Naive thymus-derived CD4-positive, alpha-beta T cell (primary cell): ENCODE measurements at regions of chr3 and their contacts with region 1.

Region 1: DNA sequence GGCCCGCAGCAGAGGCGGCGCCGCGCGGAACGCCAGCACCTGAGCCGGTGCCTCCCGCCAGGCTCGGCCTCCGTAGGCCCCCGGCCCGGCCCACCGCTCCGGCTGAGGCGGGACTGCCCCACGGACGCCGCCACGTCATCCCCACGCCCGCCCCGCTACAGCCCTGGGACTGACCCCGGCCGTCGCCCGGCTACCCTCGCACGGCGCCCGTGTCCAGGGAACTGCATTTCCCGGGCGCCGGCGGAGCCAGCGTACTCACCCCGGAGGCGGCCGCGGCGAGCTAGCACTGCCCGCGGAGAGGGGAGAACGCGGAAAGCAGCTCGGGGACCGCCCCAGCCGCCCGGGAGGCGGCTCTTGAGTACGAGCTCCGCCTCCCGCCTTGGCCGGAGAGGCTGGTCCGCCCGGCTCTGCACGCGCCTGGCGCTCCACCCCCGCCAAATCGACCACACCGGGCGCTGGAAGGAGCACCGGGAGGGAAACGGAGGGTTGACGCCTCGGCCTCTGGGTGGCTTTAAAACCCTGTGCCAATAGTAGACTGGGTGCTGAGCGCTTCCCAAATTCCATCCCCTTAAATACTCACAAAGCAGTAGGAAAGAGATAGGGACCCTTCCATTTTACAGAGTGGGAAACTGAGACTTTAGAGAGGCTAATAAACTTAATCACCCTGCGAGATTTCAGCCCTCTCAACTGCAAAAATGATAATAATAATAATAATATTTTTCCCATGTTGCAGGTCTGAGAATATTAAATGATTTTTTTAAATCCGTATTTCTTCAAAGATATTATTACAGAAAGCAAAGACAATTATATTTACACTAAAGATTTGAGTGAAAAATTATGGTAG is at the start of gene B4GALT4:
- DNase-seq: peak; percentile 59 to 79 (median 63)
- ATAC-seq: peak; percentile 78
- H3K4me3 ChIP-seq: peak within 1 kb of the TSS; percentile 71
- H3K4me3 Mint-ChIP-seq: peak within 1 kb of the TSS; percentile 90 to 99 (median 94)
- H3K27ac ChIP-seq: peak within 1 kb of the TSS; percentile 90
- H3K27ac Mint-ChIP-seq: peak within 1 kb of the TSS; percentile 83 to 96 (median 91)
- H3K4me1 ChIP-seq: peaks cover 23 to 27% of the 10 kb centered on the region in 2 donors
- H3K4me1 Mint-ChIP-seq: peaks cover 24 to 45% (median 36%) of the 10 kb centered on the region in 7 donors
- H3K27me3 ChIP-seq: no peaks in the 10 kb centered on the region
- H3K27me3 Mint-ChIP-seq: no peaks in the 10 kb centered on the region
- total RNA-seq, gene B4GALT4: 18.0 to 39.8 (median 31.9) TPM

Region 2: DNA sequence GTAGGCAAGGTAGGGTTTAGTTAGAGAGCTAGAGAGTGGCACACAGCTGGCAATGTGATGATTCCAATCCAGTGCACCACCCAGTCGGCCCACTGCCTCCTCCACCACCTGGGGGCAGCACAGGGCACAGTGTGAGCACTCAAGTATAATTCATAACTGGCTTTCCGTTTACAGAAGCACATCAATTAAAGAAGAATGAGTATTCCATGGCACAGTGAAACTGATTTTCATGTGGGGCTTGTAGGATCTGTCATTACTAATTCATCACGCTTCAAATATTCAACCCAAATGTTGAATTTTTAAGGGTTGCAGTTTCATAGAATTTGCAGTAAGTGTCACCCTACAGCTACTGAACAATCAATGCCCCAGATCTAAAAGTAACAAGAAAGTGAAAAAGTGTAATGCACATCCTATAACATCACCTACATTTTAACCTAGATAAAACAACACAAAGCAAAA is 356.0 kb before region 1 on chr3:
- CTCF ChIA-PET with region 1: interaction called, 38 read pairs
- POLR2A ChIA-PET with region 1: interaction called, 9 read pairs
- intact Hi-C with region 1: loop called (anchors 1 kb)
- DNase-seq: peak; percentile 58 to 83 (median 76)
- ATAC-seq: peak; percentile 88
- H3K4me3 ChIP-seq: no peak overlapping the region
- H3K4me3 Mint-ChIP-seq: peak overlapping the region in 5 of 10 donors; percentile 21 to 63 (median 40)
- H3K27ac ChIP-seq: no peak overlapping the region
- H3K27ac Mint-ChIP-seq: no peak overlapping the region
- H3K4me1 ChIP-seq: no peaks in the 10 kb centered on the region
- H3K4me1 Mint-ChIP-seq: peaks cover 0 to 18% (median 7%) of the 10 kb centered on the region in 7 donors
- H3K27me3 ChIP-seq: no peaks in the 10 kb centered on the region
- H3K27me3 Mint-ChIP-seq: peaks cover 8 to 16% (median 11%) of the 10 kb centered on the region in 5 donors

Region 3: GRCh38 chr3:119034256-119035013 is 206.4 kb before region 1 on chr3 and contains the start of gene IGSF11:
- CTCF ChIA-PET with region 1: interaction called, 13 read pairs
- POLR2A ChIA-PET with region 1: interaction called, 4 read pairs
- intact Hi-C with region 1: loop called (anchors 1 kb)
- DNase-seq: peak; percentile 52 to 79 (median 68)
- ATAC-seq: peak; percentile 93
- H3K4me3 ChIP-seq: peak within 1 kb of the TSS; percentile 62
- H3K4me3 Mint-ChIP-seq: peak within 1 kb of the TSS; percentile 83 to 93 (median 90)
- H3K27ac ChIP-seq: no peak within 1 kb of the TSS
- H3K27ac Mint-ChIP-seq: peak within 1 kb of the TSS in 3 of 9 donors; percentile 46 to 81 (median 58)
- H3K4me1 ChIP-seq: no peaks in the 10 kb centered on the region
- H3K4me1 Mint-ChIP-seq: peaks cover 0 to 17% (median 10%) of the 10 kb centered on the region in 7 donors
- H3K27me3 ChIP-seq: peaks cover 5 to 7% of the 10 kb centered on the region in 2 donors
- H3K27me3 Mint-ChIP-seq: peaks cover 34 to 64% (median 48%) of the 10 kb centered on the region in 5 donors
- total RNA-seq, gene IGSF11: 0.15 to 0.85 (median 0.49) TPM in 4 of 5 experiments, not detected in the other

Region 4: GRCh38 chr3:119219069-119219468 is 21.7 kb before region 1 on chr3:
- CTCF ChIA-PET with region 1: interaction called, 14 read pairs
- POLR2A ChIA-PET with region 1: interaction called, 9 read pairs
- intact Hi-C with region 1: loop called (anchors 1 kb)
- DNase-seq: peak in 7 of 9 donors; percentile 65 to 87 (median 76)
- ATAC-seq: peak; percentile 96
- H3K4me3 ChIP-seq: peak overlapping the region; percentile 34
- H3K4me3 Mint-ChIP-seq: peak overlapping the region; percentile 54 to 87 (median 70)
- H3K27ac ChIP-seq: peak overlapping the region; percentile 68
- H3K27ac Mint-ChIP-seq: peak overlapping the region; percentile 90 to 99 (median 94)
- H3K4me1 ChIP-seq: peaks cover 9 to 25% of the 10 kb centered on the region in 2 donors
- H3K4me1 Mint-ChIP-seq: peaks cover 22 to 84% (median 71%) of the 10 kb centered on the region in 7 donors
- H3K27me3 ChIP-seq: no peaks in the 10 kb centered on the region
- H3K27me3 Mint-ChIP-seq: no peaks in the 10 kb centered on the region

Region 5: DNA sequence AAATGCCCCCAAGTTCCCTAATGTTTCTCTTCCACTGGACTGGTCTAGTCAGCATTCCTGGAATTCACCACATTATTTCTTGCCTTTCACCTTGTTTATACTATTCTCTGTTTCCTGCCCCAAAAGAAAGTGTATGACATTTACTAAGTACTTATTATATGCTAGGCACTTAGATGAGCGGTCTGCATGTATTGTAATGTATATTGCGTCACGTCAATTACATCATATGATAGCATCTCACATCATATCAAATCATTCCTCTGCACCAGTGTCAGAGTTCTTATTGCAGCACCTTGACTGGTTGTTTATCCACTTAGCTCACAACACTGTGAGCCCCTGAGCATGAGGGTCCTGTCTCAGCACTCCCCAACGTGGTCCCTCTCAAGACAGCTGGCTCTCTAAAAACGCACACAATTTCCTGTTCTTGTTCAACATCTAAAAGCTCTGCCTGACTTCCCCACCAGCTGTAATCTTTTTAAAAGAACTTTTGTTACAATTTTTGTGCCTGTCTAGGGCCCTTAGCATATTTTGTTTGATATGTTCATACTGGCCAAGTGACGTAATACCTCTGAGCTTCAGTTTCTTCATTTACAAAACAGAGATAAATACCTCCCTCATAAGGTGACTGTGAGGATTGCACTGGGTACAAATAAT is 112.2 kb after region 1 on chr3:
- CTCF ChIA-PET with region 1: interaction called, 18 read pairs
- POLR2A ChIA-PET with region 1: interaction called, 9 read pairs
- intact Hi-C with region 1: loop called in 1 of 2 experiments (anchors 1 kb)
- DNase-seq: peak in 7 of 9 donors; percentile 53 to 78 (median 69)
- ATAC-seq: peak; percentile 77
- H3K4me3 ChIP-seq: no peak overlapping the region
- H3K4me3 Mint-ChIP-seq: peak overlapping the region in 8 of 10 donors; percentile 2 to 67 (median 54)
- H3K27ac ChIP-seq: no peak overlapping the region
- H3K27ac Mint-ChIP-seq: peak overlapping the region in 8 of 9 donors; percentile 13 to 81 (median 42)
- H3K4me1 ChIP-seq: peaks cover 0 to 35% of the 10 kb centered on the region in 2 donors
- H3K4me1 Mint-ChIP-seq: peaks cover 26 to 47% (median 36%) of the 10 kb centered on the region in 7 donors
- H3K27me3 ChIP-seq: no peaks in the 10 kb centered on the region
- H3K27me3 Mint-ChIP-seq: peaks cover 0 to 20% (median 0%) of the 10 kb centered on the region in 5 donors

Region 6: DNA sequence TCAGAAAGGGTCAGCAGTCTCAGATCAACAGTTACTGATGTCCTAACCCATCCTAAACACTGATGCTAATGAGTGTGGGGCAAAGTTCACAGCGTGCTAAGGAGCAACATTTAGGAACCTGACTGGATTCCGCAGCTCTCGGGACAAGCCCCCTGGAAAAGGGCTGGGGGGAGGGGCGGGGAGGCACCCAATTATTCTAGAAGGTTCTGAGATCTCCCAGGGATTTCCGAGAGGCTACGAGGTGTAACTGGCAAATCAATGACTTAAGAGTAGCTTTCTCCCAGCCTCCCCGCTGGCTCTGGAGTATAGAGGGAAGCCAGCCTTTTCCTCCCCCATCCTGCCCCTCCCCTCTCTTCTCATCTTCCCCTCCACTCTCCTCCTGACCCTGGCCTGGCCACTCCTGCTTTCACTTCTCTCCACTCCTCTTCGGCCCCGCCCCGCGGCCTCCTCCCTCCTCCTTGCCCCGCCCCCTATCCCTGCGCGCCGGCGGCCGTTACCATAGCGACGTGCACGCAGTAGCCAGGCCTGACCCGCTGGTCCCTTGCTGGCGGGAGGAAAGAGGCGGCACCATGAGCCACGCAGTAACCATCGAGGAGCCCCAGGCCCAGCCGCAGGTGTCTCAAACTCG is 461.8 kb after region 1 on chr3 and contains the start of gene CFAP91:
- CTCF ChIA-PET with region 1: no interaction called
- POLR2A ChIA-PET with region 1: no interaction called
- intact Hi-C with region 1: loop called in 1 of 2 experiments (anchors 2 kb)
- DNase-seq: peak; percentile 56 to 81 (median 63)
- ATAC-seq: peak; percentile 97
- H3K4me3 ChIP-seq: peak within 1 kb of the TSS; percentile 61
- H3K4me3 Mint-ChIP-seq: peak within 1 kb of the TSS; percentile 67 to 87 (median 82)
- H3K27ac ChIP-seq: peak within 1 kb of the TSS; percentile 16
- H3K27ac Mint-ChIP-seq: peak within 1 kb of the TSS in 6 of 9 donors; percentile 15 to 47 (median 43)
- H3K4me1 ChIP-seq: peaks cover 0 to 13% of the 10 kb centered on the region in 2 donors
- H3K4me1 Mint-ChIP-seq: peaks cover 16 to 36% (median 30%) of the 10 kb centered on the region in 7 donors
- H3K27me3 ChIP-seq: no peaks in the 10 kb centered on the region
- H3K27me3 Mint-ChIP-seq: peaks cover 0 to 33% (median 3%) of the 10 kb centered on the region in 5 donors
- total RNA-seq, gene CFAP91: 0.13 to 0.32 TPM in 2 of 5 experiments, not detected in the others